Gastrocnemius medialis (tissue), 4 donors: ENCODE measurements at regions of chrX and their contacts with region 1.

Region 1: GRCh38 chrX:103157496-103158320 is 57.2 kb upstream of the BEX4 start:
- DNase-seq: no peak
- ATAC-seq: no peak
- H3K4me3 ChIP-seq: no peak overlapping the region
- H3K27ac ChIP-seq: no peak overlapping the region
- H3K4me1 ChIP-seq: no peaks in the 10 kb centered on the region
- H3K27me3 ChIP-seq: no peaks in the 10 kb centered on the region
- CTCF ChIP-seq: peak in 1 of 5 experiments; percentile 33
- POLR2A ChIP-seq: no peak

Region 2: GRCh38 chrX:102934624-102935023 is 223.1 kb before region 1 on chrX:
- in situ Hi-C with region 1: loop called in 1 of 4 experiments (anchors 25 kb)
- intact Hi-C with region 1: no loop called
- DNase-seq: no peak
- ATAC-seq: no peak
- H3K4me3 ChIP-seq: no peak overlapping the region
- H3K27ac ChIP-seq: no peak overlapping the region
- H3K4me1 ChIP-seq: no peaks in the 10 kb centered on the region
- H3K27me3 ChIP-seq: no peaks in the 10 kb centered on the region
- CTCF ChIP-seq: peak in 2 of 5 experiments; percentile 34 to 50
- POLR2A ChIP-seq: no peak

Region 3: GRCh38 chrX:103063918-103064434 is 93.7 kb before region 1 on chrX and contains the start of gene BEX1:
- in situ Hi-C with region 1: loop called in 1 of 4 experiments (anchors 25 kb)
- intact Hi-C with region 1: no loop called
- DNase-seq: no peak
- ATAC-seq: no peak
- H3K4me3 ChIP-seq: peak within 1 kb of the TSS in 1 of 4 donors; percentile 17
- H3K27ac ChIP-seq: no peak within 1 kb of the TSS
- H3K4me1 ChIP-seq: no peaks in the 10 kb centered on the region
- H3K27me3 ChIP-seq: peaks cover 0 to 14% (median 4%) of the 10 kb centered on the region in 3 donors
- CTCF ChIP-seq: no peak
- POLR2A ChIP-seq: no peak
- total RNA-seq, gene BEX1: not detected